Adrenal gland (tissue), 19 donors: ENCODE measurements at regions of chr5 and their contacts with region 1.

Region 1: DNA sequence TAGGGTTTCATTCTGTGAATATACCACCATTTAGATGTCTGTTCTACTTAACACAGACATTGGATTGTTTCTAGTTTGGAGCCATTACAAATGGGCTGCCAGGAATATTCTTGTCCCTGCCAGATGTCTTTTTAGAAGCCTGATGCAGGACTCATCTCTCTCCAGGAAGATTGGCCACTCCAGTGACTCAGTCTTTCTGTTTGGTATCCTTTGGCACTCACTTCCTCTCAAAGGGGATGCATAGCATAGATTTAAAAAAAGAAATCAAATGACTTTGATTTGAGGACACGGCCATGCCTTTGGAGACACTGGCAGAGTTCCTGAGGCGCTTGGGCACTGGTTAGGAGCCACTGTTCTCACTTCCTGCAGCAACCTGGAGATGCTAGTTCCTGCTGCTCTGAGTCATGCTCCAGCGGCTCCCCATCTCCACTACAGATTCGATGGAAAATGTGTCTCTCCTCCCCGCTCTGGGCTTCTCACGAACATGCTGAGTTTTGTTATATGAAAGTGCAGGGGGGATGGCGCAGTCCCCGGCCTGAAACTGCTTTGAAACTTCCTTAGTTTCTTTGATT is 3.5 kb upstream of the ZNF366 start:
- DNase-seq: peak in 3 of 7 donors; percentile 22 to 63 (median 28)
- H3K4me3 ChIP-seq: no peak overlapping the region
- H3K27ac ChIP-seq: peak overlapping the region in 1 of 5 donors; percentile 4
- H3K4me1 ChIP-seq: peaks cover 0 to 10% of the 10 kb centered on the region in 2 donors
- H3K27me3 ChIP-seq: no peaks in the 10 kb centered on the region
- CTCF ChIP-seq: no peak
- POLR2A ChIP-seq: no peak

Region 2: DNA sequence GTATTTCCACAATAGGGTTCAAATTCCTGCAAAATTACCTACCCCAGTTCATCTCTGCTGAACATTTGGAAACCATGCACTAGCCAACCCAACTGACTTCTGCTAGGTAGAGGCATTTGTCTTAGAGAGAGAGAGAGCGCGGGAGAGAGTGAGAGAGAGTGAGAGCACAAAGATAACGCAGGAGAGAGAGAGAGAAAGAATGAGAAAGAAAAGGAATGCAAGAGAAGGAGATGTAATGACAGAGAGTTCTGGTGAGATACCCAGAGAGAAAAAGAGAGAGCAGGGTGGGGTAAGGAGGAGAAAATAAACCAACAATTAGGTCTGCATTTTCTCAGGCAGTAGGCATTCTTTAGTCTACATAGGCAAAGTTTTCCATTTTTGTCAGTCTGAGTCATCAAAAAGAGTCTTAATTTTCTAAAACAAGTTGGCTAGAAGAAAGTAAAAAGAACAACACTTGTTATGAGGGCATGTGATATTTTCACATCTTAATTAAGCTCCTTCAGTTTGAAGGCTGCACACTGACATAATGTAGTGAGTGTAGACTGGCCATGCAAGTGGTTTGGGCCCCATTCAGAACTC is 305.2 kb before region 1 on chr5:
- intact Hi-C with region 1: no loop called
- DNase-seq: no peak
- H3K4me3 ChIP-seq: no peak overlapping the region
- H3K27ac ChIP-seq: no peak overlapping the region
- H3K4me1 ChIP-seq: peaks cover under 1 to 2% of the 10 kb centered on the region in 2 donors
- H3K27me3 ChIP-seq: no peaks in the 10 kb centered on the region
- CTCF ChIP-seq: no peak
- POLR2A ChIP-seq: no peak

Region 3: DNA sequence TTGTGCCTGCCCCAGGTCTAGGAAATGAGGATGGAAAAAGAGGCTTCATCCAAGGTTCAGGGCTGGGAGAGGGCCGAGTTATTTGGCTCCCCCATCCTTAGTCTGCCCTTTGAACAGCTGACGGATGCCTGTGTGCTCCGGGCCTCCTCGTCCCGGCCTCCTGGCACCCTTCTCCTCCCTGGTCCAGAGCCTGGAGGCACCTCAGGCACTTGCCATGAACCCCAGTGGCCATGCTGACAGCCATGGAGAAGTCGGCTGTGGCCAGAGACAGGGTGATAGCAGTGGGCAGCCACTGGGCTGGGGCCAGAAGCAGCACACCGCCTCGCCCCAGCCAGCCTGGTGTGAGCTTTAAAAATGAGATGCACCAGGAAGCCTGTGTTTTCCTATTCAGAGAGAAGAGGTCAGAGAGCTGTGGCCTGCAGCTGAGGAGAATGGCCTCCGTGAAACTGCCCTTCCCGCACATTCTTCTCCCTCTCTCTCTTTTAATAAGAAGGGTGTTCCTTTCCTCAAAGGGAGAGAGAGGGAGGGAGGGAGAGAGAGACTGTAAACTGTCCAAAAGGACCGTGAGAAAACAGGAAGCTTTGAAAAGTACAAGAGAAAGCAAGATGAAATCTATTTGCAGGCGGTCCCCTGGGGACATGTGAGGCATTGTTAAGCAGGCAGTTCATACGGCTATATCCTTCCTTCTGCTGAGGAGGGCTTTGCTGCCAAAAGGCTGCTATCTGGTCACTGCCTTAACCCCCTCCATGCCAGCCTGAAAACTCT is 58.8 kb before region 1 on chr5:
- intact Hi-C with region 1: loop called in 1 of 2 experiments (anchors 10 kb)
- DNase-seq: peak; percentile 38 to 80 (median 64)
- H3K4me3 ChIP-seq: no peak overlapping the region
- H3K27ac ChIP-seq: peak overlapping the region; percentile 44 to 95 (median 82)
- H3K4me1 ChIP-seq: peaks cover 29 to 36% of the 10 kb centered on the region in 2 donors
- H3K27me3 ChIP-seq: no peaks in the 10 kb centered on the region
- CTCF ChIP-seq: no peak
- POLR2A ChIP-seq: no peak